Naive thymus-derived CD4-positive, alpha-beta T cell (primary cell): ENCODE measurements at regions of chr13 and their contacts with region 1.

Region 1: DNA sequence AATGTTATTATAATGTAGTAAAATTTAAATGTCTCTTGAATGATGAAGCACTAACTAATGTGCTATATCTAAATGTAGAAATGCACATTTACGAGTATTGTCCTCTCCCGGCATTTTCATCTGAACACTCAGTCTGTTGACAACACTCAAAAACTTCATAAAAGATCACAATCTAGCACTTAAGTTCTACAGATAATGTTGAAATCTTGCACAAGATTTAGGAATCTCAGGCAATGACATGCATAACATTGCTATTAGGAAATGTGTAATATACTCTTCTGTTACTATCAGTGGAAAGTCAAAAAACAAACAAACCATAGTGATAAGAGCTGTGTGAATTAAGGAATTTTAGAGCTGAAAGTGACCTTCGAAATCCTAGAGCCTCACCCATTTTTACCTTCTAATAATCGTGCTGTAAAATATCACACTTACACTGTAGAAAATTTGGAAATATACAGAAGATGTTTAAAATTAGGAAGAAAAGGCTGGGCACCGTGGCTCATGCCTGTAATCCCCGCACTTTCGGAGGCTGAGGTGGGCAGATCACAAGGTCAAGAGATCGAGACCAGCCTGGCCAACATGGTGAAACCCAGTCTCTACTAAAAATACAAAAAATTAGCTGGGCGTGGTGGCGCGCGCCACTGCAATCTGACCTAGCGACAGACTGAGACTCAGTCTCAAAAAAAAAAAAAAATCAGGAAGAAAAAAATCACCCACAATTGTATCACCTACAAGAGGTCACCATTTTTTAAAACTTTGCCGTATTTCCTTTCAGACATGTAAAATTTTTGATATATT is 37.7 kb upstream of the XPO4 start:
- DNase-seq: no peak
- ATAC-seq: no peak
- H3K4me3 ChIP-seq: no peak overlapping the region
- H3K4me3 Mint-ChIP-seq: no peak overlapping the region
- H3K27ac ChIP-seq: no peak overlapping the region
- H3K27ac Mint-ChIP-seq: no peak overlapping the region
- H3K4me1 ChIP-seq: no peaks in the 10 kb centered on the region
- H3K4me1 Mint-ChIP-seq: peaks cover 0 to 7% (median 3%) of the 10 kb centered on the region in 7 donors
- H3K27me3 ChIP-seq: no peaks in the 10 kb centered on the region
- H3K27me3 Mint-ChIP-seq: peaks cover 16 to 43% (median 22%) of the 10 kb centered on the region in 5 donors

Region 2: DNA sequence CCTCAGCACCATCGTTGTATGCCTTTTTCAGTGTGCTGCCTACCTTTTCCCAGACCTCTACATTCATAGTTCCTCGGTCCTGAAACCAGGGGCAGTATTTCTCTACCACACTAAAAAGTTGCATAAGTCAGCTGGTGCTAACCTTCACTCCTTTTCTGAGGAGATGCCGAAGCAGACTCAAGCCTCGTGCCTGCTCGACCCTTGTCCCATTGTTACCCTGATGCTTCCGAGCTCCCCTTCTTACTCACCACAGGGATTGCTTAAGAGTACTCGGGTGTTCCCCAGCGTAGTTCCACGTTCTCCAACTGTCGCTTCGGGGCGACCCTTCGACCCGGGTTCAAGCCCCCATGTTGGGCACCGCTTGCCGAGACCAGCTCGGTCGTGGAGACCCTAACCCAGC is 255.7 kb before region 1 on chr13:
- CTCF ChIA-PET with region 1: no interaction called
- POLR2A ChIA-PET with region 1: no interaction called
- intact Hi-C with region 1: no loop called
- DNase-seq: no peak
- ATAC-seq: no peak
- H3K4me3 ChIP-seq: no peak overlapping the region
- H3K4me3 Mint-ChIP-seq: no peak overlapping the region
- H3K27ac ChIP-seq: no peak overlapping the region
- H3K27ac Mint-ChIP-seq: peak overlapping the region in 1 of 9 donors; percentile 63
- H3K4me1 ChIP-seq: no peaks in the 10 kb centered on the region
- H3K4me1 Mint-ChIP-seq: no peaks in the 10 kb centered on the region
- H3K27me3 ChIP-seq: no peaks in the 10 kb centered on the region
- H3K27me3 Mint-ChIP-seq: peaks cover 0 to 3% (median 0%) of the 10 kb centered on the region in 5 donors

Region 3: DNA sequence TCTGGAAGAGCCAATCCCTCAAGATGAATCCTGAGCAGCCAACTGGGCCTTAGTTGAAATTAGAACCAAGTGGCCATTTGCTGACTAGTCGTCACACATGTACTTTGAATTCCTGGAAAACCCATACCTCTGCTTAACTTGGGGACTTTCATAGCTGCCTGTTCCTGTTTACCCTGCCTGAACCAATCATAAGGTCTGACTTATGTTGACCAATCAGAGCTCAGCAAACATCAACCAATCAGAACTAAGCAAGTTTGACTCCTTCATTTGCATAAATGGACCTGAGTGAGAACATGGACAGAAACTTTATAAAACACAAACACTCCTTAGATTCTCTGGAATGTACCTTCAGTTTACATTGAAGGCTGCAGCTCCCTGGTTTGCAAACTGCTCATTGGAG is 70.3 kb after region 1 on chr13:
- CTCF ChIA-PET with region 1: no interaction called
- POLR2A ChIA-PET with region 1: no interaction called
- intact Hi-C with region 1: no loop called
- DNase-seq: no peak
- ATAC-seq: no peak
- H3K4me3 ChIP-seq: no peak overlapping the region
- H3K4me3 Mint-ChIP-seq: no peak overlapping the region
- H3K27ac ChIP-seq: no peak overlapping the region
- H3K27ac Mint-ChIP-seq: peak overlapping the region in 2 of 9 donors; percentile 17 to 80
- H3K4me1 ChIP-seq: no peaks in the 10 kb centered on the region
- H3K4me1 Mint-ChIP-seq: peaks cover 0 to 17% (median 4%) of the 10 kb centered on the region in 7 donors
- H3K27me3 ChIP-seq: no peaks in the 10 kb centered on the region
- H3K27me3 Mint-ChIP-seq: no peaks in the 10 kb centered on the region

Region 4: GRCh38 chr13:21137696-21138095 is 197.4 kb after region 1 on chr13:
- CTCF ChIA-PET with region 1: no interaction called
- POLR2A ChIA-PET with region 1: no interaction called
- intact Hi-C with region 1: loop called (anchors 1 kb)
- DNase-seq: no peak
- ATAC-seq: no peak
- H3K4me3 ChIP-seq: no peak overlapping the region
- H3K4me3 Mint-ChIP-seq: no peak overlapping the region
- H3K27ac ChIP-seq: no peak overlapping the region
- H3K27ac Mint-ChIP-seq: no peak overlapping the region
- H3K4me1 ChIP-seq: peaks cover 12 to 22% of the 10 kb centered on the region in 2 donors
- H3K4me1 Mint-ChIP-seq: peaks cover 12 to 30% (median 22%) of the 10 kb centered on the region in 7 donors
- H3K27me3 ChIP-seq: peaks cover 0 to 3% of the 10 kb centered on the region in 2 donors
- H3K27me3 Mint-ChIP-seq: peaks cover 6 to 24% (median 19%) of the 10 kb centered on the region in 5 donors

Region 5: DNA sequence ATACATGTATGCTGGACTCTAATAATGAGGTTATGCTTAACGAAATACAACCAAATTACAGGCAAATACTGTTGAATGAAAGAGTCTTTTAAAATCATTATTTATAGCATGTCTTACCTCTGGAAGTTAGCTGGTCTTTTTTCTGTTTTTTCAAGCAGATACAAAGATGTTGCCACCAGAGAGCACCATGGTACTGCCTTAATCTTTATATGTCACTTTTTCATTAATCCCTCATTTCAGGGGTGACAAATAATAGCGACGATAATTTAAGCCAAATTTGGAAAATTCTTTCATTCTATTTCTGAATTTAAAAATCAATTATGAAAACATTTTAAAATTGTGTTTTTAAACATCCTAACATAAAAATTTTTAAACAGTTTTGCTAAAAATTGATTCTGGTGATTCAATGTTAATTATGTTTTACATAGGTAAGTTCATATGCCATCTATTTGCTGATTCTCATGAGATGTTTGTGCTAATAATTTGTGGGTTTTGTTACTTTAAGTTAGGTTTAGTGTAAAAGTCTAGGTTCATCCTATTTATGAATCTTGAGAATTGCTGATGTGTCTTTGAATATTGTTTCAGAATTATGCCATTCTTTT is 1861.2 kb after region 1 on chr13:
- CTCF ChIA-PET with region 1: no interaction called
- POLR2A ChIA-PET with region 1: no interaction called
- intact Hi-C with region 1: loop called in 1 of 2 experiments (anchors 5 kb)
- DNase-seq: no peak
- ATAC-seq: no peak
- H3K4me3 ChIP-seq: no peak overlapping the region
- H3K4me3 Mint-ChIP-seq: no peak overlapping the region
- H3K27ac ChIP-seq: no peak overlapping the region
- H3K27ac Mint-ChIP-seq: no peak overlapping the region
- H3K4me1 ChIP-seq: no peaks in the 10 kb centered on the region
- H3K4me1 Mint-ChIP-seq: no peaks in the 10 kb centered on the region
- H3K27me3 ChIP-seq: no peaks in the 10 kb centered on the region
- H3K27me3 Mint-ChIP-seq: peaks cover 2 to 29% (median 18%) of the 10 kb centered on the region in 5 donors